ENCODE measurements at regions of chr5 and their contacts with region 1.

Region 1: GRCh38 chr5:141968914-141969608 is at the start of gene RNF14:
- DNase-seq: peak; percentile 98
- ATAC-seq: peak; percentile 96
- H3K4me3 Mint-ChIP-seq: peak within 1 kb of the TSS; percentile 97
- H3K27ac Mint-ChIP-seq: peak within 1 kb of the TSS; percentile 96
- H3K4me1 Mint-ChIP-seq: peaks cover 30% of the 10 kb centered on the region
- H3K27me3 Mint-ChIP-seq: no peaks in the 10 kb centered on the region
- total RNA-seq, gene RNF14: 35.7 to 38.0 TPM

Region 2: GRCh38 chr5:141664732-141665461 is 304.2 kb before region 1 on chr5:
- CTCF ChIA-PET with region 1: interaction called, 4 read pairs
- POLR2A ChIA-PET with region 1: no interaction called
- intact Hi-C with region 1: loop called in 1 of 2 experiments (anchors 10 kb)
- DNase-seq: peak; percentile 86
- ATAC-seq: peak; percentile 97
- H3K4me3 Mint-ChIP-seq: no peak overlapping the region
- H3K27ac Mint-ChIP-seq: no peak overlapping the region
- H3K4me1 Mint-ChIP-seq: peaks cover 4% of the 10 kb centered on the region
- H3K27me3 Mint-ChIP-seq: no peaks in the 10 kb centered on the region

Region 3: DNA sequence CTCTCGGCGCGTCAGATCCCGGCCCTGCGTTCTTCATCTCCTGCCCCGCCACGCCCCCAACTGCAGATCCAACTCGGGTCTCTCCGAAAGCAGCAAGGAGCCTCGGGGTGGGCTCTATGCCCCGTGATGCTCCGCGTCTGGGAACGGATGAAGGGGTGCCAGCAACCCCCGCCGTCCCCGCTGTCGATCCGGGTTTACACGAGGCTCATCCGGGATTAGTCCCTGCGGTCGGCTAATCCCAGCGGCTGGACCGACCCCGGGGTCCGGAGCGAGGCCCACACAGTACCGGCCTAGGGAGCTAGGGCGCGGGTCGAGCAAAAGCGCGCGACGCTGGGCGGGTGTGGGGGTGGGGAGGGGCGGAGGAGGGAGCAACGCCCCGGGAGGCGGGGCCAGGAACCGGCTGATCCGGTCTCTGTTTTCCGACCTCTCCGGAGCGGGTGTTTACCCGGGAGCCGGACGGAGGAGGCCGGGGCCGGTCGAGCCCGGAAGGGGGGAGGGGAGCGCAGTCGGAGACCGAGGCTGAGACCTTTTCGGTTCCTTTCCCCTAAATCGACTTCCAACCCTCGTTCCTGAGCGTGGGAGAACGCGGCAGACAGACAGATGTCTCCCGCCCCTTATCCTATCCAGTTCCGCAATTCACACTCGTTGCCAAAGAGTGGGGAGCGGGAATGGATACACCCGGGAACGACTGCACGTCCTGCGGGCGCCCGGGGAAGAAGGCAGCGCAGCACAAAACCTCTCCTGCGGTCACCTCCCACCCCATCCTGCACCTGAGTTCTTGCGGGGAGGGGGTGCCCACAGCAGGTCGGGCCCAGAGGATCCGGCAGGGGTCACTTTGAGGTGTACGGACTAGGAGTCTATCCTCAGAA is 119.5 kb before region 1 on chr5:
- CTCF ChIA-PET with region 1: interaction called, 4 read pairs
- POLR2A ChIA-PET with region 1: no interaction called
- intact Hi-C with region 1: loop called in 1 of 2 experiments (anchors 1 kb)
- DNase-seq: peak; percentile 87
- ATAC-seq: peak; percentile 80
- H3K4me3 Mint-ChIP-seq: peak overlapping the region; percentile 78
- H3K27ac Mint-ChIP-seq: peak overlapping the region; percentile 86
- H3K4me1 Mint-ChIP-seq: peaks cover 15% of the 10 kb centered on the region
- H3K27me3 Mint-ChIP-seq: peaks cover 2% of the 10 kb centered on the region

Region 4: DNA sequence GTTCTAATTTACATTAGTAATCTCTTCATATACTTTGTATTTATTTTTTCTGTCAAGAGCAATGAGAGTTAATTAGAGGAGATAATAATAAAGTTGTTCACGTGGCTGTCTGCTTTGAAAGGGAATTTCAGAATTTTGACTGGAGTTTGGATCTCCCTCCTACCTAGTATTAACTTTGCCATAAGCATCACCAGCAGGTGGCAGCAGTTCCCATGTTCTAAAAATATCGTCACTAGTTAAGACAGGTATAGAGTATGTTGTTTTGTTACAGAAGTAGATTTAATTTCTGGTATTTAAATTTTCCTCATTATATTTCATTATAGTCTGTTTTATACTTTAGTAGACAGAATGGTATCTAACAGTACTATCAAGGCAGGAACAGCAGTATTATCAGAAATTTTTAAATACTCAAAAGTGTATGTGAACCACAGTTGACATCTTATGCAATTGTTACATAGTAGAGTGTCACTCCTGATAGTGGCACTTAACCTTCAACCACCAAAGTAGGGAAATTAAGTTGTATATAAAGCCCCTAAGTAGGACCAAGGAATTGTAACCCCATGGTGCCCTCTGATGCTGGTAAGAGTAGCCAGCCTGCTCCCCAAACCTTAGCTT is 23.4 kb after region 1 on chr5:
- CTCF ChIA-PET with region 1: interaction called, 31 read pairs
- POLR2A ChIA-PET with region 1: no interaction called
- intact Hi-C with region 1: no loop called
- DNase-seq: peak; percentile 89
- ATAC-seq: peak; percentile 88
- H3K4me3 Mint-ChIP-seq: no peak overlapping the region
- H3K27ac Mint-ChIP-seq: peak overlapping the region; percentile 19
- H3K4me1 Mint-ChIP-seq: no peaks in the 10 kb centered on the region
- H3K27me3 Mint-ChIP-seq: no peaks in the 10 kb centered on the region

Region 5: DNA sequence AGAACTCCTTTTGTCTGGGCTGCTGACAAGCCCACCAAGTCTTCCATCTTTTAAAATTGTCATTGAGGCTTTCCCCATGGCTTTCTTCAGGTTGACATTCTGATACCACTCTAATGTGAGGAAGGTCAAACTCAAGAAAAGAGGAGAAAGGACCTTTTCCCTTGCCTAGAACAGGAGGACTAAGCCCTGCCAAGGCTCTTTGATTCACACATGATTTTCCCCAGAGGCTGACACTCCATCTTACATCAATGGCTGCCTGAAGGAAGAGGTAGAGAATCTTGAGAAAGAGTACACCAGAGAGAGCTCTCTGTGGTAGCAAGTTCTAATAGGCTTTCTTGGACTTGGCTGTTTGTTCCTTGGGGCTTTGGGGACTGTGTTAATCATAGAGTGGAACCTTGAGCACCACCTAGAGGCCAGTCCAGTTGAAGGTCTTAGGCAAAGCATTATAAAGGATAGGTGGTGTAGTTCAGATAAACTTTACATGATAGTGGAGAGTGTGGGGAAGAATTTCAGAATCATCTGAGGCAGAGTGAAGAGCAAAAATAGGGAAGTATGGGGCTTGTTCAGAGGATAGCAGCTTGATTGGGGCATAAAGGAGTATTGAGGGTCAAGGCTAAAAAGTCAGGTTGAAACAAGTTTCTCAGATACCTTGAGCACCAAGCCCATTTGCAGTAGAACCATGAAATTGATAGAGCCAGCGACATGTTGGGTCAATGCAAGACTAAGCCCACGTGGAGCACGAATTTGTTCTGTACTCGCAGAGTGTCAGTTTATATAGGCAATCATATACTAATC is 176.2 kb after region 1 on chr5:
- CTCF ChIA-PET with region 1: interaction called, 13 read pairs
- POLR2A ChIA-PET with region 1: no interaction called
- intact Hi-C with region 1: no loop called
- DNase-seq: peak; percentile 78
- ATAC-seq: peak; percentile 93
- H3K4me3 Mint-ChIP-seq: no peak overlapping the region
- H3K27ac Mint-ChIP-seq: no peak overlapping the region
- H3K4me1 Mint-ChIP-seq: peaks cover 7% of the 10 kb centered on the region
- H3K27me3 Mint-ChIP-seq: no peaks in the 10 kb centered on the region

Measured in activated CD4-positive, alpha-beta T cell treated with anti-CD3 and anti-CD28 coated beads for 36 hours (primary cell).